Activated CD4-positive, alpha-beta memory T cell treated with anti-CD3 and anti-CD28 coated beads for 36 hours (primary cell): ENCODE measurements at regions of chr3 and their contacts with region 1.

Region 1: GRCh38 chr3:183099026-183099837 is at the start of gene MCCC1:
- DNase-seq: peak; percentile 99
- H3K4me3 Mint-ChIP-seq: peak within 1 kb of the TSS; percentile 95
- H3K27ac Mint-ChIP-seq: peak within 1 kb of the TSS; percentile 96
- H3K4me1 Mint-ChIP-seq: peaks cover 34% of the 10 kb centered on the region
- H3K27me3 Mint-ChIP-seq: no peaks in the 10 kb centered on the region
- total RNA-seq, gene MCCC1: 28.4 to 29.7 TPM

Region 2: DNA sequence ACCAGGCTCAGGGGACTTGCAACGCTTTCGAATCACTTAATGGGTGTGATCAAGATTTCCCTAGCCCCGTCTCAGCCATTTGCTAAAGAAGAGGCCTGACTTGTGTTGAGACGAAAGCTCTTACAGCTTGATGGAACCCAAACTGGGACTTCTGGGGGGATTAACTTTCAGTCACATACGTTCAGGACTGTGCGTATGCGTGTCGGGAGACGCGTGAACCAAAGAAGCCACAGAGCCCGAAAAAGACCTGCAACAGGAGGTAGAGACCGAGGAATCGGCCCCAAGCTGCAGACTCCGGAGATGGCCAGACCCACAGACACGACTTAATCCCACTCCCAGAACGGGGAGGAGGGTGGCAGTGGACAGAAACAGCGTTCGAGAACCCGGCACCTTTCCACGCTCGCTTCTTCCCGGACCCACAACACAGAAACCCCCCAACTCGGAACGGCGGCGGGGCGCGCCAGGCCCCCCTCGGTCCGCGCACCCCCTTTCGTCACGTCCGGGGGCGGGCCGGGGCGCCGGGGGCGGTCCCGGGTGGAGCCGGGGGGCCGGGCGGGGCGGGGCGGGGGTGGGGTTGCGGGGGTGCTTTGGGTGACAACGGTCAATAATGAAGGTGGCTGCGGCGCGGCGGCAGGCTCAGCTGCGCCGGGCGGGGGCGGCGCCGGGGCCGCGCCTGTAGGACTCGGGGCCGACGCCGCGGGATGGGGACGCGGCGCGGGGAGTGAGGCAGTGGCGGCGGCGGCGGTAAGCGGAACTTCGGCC is 306.1 kb before region 1 on chr3 and contains the start of gene ATP11B:
- CTCF ChIA-PET with region 1: no interaction called
- POLR2A ChIA-PET with region 1: interaction called, 7 read pairs
- intact Hi-C with region 1: loop called (anchors 5 kb)
- DNase-seq: peak; percentile 82
- H3K4me3 Mint-ChIP-seq: peak within 1 kb of the TSS; percentile 93
- H3K27ac Mint-ChIP-seq: peak within 1 kb of the TSS; percentile 94
- H3K4me1 Mint-ChIP-seq: peaks cover 24% of the 10 kb centered on the region
- H3K27me3 Mint-ChIP-seq: peaks cover 2% of the 10 kb centered on the region
- total RNA-seq, gene ATP11B: 93.9 to 96.0 TPM

Region 3: GRCh38 chr3:182909318-182910040 is 189.8 kb before region 1 on chr3:
- CTCF ChIA-PET with region 1: interaction called, 4 read pairs
- POLR2A ChIA-PET with region 1: interaction called, 3 read pairs
- intact Hi-C with region 1: loop called (anchors 2 kb)
- DNase-seq: peak; percentile 16
- H3K4me3 Mint-ChIP-seq: no peak overlapping the region
- H3K27ac Mint-ChIP-seq: no peak overlapping the region
- H3K4me1 Mint-ChIP-seq: peaks cover 44% of the 10 kb centered on the region
- H3K27me3 Mint-ChIP-seq: no peaks in the 10 kb centered on the region

Region 4: DNA sequence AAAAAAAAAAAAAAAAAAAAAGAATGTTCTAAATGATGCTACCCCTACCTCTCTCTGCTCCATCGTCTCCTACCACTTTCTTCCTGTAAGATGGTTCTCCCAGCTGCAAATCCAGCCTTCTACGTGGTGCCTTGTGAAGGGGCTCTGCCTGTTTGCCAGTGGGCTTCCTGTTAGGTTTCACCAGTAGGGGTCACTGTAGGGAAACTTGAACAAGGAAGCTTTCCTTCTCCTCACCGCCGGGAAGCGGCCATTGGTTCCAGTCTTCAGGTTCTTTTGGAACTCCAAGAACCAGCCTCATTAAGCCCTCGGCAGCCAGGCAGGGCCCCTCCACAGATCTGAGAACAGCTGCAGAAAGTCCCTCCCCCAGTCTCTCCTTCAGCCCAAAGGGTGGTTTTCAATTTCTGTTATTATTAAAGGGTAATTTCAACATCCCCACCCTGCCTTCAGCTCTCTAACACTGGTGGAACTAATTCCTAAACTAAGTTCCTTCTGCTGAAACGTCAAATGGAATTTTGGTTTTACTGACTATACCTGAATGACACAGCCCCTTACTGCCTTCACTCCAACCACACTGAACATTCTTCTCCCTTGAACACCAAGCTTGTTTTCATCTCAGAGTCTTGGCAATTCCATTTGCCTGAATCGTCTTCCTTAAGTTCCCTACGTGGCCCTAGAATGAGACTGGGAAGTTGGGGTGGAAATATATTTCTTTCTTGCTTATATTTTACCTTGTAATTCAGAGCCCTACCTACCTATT is 13.4 kb before region 1 on chr3:
- CTCF ChIA-PET with region 1: interaction called, 36 read pairs
- POLR2A ChIA-PET with region 1: no interaction called
- intact Hi-C with region 1: no loop called
- DNase-seq: peak; percentile 16
- H3K4me3 Mint-ChIP-seq: no peak overlapping the region
- H3K27ac Mint-ChIP-seq: no peak overlapping the region
- H3K4me1 Mint-ChIP-seq: no peaks in the 10 kb centered on the region
- H3K27me3 Mint-ChIP-seq: no peaks in the 10 kb centered on the region

Region 5: GRCh38 chr3:183158551-183159006 is 59.3 kb after region 1 on chr3:
- CTCF ChIA-PET with region 1: no interaction called
- POLR2A ChIA-PET with region 1: interaction called, 3 read pairs
- intact Hi-C with region 1: loop called (anchors 1 kb)
- DNase-seq: peak; percentile 67
- H3K4me3 Mint-ChIP-seq: no peak overlapping the region
- H3K27ac Mint-ChIP-seq: peak overlapping the region; percentile 26
- H3K4me1 Mint-ChIP-seq: peaks cover 27% of the 10 kb centered on the region
- H3K27me3 Mint-ChIP-seq: peaks cover 3% of the 10 kb centered on the region